ENCODE measurements at regions of chr20 and their contacts with region 1.

Region 1: DNA sequence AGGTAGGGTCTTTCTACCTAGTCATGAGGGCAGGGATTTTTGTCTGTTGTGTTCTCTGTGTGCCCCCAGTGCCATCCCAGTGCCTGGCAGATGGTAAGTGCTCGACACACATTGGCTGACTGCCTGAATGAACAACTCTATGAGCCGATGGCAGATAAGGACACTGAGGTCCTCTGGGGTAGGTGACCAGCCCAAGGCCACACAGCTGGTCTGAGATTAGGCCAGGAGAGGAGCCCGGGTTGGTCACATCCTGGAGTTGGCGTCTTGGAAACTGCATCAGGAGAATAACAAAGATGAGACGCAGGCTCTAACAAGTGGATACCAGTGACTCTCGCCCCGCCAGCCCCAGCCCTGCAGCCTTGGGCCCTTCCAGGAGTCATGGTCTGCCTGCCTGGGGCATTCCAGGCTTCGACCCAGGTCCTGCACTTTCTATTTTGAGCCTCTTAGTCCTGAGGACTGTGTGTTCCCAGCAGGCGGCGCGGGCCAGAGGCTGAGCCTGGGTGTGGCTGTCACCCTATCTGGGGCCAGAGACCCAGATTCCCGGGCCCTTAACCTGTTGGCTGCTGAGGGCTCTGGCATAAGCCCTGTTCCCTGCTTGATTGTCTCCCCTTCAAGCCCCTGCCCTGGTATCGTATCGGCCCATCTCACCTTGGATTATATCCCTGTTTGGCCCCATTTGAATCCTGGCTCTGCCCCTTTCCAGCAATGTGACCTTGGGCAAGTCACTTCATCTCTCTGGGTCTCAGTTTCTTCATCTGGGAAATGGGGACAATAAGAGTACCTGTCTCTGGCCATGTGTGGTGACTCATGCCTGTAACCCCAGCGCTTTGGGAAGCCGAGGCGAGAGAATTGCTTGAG is 88.3 kb downstream of the CEBPB start:
- DNase-seq: peak in 1 of 5 donors; percentile 94
- H3K4me3 ChIP-seq: no peak overlapping the region
- H3K27ac ChIP-seq: peak overlapping the region in 1 of 2 donors; percentile 51
- H3K4me1 ChIP-seq: peaks cover 0 to 6% (median 0%) of the 10 kb centered on the region in 3 donors
- H3K27me3 ChIP-seq: no peaks in the 10 kb centered on the region
- CTCF ChIP-seq: peak; percentile 14

Region 2: DNA sequence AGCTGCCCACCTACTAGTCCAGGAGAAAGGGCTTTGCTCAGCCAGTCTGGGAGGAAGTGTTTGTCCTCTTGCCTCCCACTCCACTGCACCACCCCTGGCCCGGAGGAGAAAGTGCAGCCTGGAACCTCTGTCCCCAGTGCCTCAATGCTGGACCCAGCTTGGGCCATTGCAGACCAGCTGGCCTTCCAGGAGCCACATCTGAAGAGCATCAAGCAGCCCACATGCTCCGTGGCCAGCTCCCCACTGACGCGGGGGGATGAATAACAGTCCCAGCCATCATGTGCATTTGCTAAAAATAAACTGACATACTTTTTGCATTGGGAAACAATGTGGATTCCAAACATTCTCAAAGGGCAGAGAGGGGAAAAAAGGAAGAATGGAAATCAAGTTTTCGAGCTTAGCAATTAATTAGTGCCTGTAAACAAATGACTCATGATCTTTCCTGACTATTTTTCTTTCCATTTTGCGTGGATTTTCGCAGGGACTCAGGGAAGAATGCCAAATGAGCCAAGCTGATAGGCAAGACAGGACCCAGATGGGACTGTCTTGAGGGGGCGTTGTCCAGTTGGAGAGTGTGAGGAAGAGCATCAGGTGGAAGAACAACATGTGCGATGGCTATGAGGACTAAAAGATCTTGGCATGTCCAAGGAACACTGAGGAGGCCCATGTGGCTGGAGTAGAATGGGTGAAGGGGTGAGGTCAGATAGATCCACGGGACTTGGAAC is 54.2 kb before region 1 on chr20:
- intact Hi-C with region 1: loop called (anchors 10 kb)
- DNase-seq: peak in 3 of 5 donors; percentile 41 to 93 (median 87)
- H3K4me3 ChIP-seq: no peak overlapping the region
- H3K27ac ChIP-seq: peak overlapping the region; percentile 67 to 79
- H3K4me1 ChIP-seq: peaks cover 0 to 5% (median 2%) of the 10 kb centered on the region in 3 donors
- H3K27me3 ChIP-seq: no peaks in the 10 kb centered on the region
- CTCF ChIP-seq: no peak